ENCODE measurements at regions of chr2 and their contacts with region 1.

Region 1: DNA sequence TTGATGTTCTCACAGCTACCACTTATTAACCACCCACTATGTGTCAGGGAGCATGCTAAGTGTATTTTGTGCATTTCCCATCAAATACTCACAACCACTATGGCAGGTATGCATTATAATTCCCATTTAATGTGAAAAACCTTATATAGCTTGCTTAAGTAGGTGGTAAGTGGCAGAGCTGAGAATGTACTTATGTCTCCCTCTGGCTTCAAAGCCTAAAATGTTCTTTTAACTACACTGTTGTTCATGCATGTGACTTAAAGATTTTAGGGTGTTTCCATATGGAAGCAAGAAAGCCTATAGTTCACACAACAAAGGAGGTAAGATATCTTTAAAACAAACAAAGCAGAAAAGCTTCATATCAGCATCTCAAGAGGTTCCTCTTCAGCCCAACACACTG is 227.8 kb downstream of the HNMT start:
- DNase-seq: no peak
- H3K4me3 ChIP-seq: no peak overlapping the region
- H3K27ac ChIP-seq: no peak overlapping the region
- H3K4me1 ChIP-seq: no peaks in the 10 kb centered on the region; a peak in 1 of 7 replicates
- H3K27me3 ChIP-seq: no peaks in the 10 kb centered on the region
- CTCF ChIP-seq: no peak
- EP300 ChIP-seq: no peak
- POLR2A ChIP-seq: no peak
- RAD21 ChIP-seq: no peak

Region 2: GRCh38 chr2:138180692-138181386 is 11.3 kb before region 1 on chr2:
- CTCF ChIA-PET with region 1: interaction called, 10 read pairs
- POLR2A ChIA-PET with region 1: interaction called, 3 read pairs
- DNase-seq: no peak
- H3K4me3 ChIP-seq: no peak overlapping the region
- H3K27ac ChIP-seq: no peak overlapping the region
- H3K4me1 ChIP-seq: peaks cover 2 to 5% (median 5%) of the 10 kb centered on the region in 4 experiments; a peak in 5 of 7 replicates
- H3K27me3 ChIP-seq: no peaks in the 10 kb centered on the region
- CTCF ChIP-seq: peak in 2 of 3 experiments; percentile 27 to 34; a peak in 2 of 4 replicates
- EP300 ChIP-seq: no peak
- POLR2A ChIP-seq: no peak
- RAD21 ChIP-seq: peak; percentile 46 to 61; a peak in 3 of 4 replicates

Measured in H1 (cell line).